Activated CD4-positive, alpha-beta memory T cell treated with anti-CD3 and anti-CD28 coated beads, Interleukin-2, amount 10 ng/mL, durations not matched to agents 7 days and 5 days (primary cell): ENCODE measurements at regions of chr5 and their contacts with region 1.

Region 1: DNA sequence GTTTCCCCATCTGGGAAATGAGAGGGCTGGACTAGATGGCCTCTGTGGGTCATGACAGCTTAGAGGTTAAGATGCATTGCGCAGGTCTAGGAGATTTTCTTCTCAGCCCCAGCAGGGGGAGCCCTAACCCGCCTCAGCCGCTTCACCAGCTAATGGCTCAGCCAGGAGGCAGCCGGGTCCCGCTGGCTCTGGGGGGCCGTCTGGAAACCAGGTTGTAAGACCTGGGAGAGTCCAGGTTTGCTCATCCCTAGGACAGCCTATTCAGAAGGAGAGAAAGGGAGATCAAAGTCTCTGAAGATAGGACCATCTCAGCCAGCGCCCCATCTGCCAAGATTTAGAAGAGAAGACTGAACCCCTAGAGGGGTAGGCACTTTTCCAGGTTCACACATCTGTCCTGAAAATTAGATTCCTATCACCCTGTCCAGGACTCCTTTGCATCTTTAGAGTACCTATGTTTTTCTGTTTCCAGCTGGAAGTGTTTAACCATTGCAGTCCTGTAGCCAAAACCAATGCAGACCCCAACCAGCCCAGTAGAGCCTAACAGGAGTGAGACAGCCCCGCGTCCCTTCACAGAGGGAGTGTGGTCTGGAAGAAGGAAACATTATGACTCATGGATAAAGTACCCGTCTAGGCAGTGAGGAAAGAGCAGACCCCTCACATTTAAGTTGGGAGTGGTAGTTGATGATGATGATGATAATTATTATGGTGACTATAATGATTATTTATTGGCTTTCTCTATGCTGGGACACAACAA is 27.5 kb downstream of the SPARC start:
- DNase-seq: peak; percentile 82
- H3K4me3 Mint-ChIP-seq: no peak overlapping the region
- H3K27ac Mint-ChIP-seq: no peak overlapping the region
- H3K4me1 Mint-ChIP-seq: peaks cover 19% of the 10 kb centered on the region
- H3K27me3 Mint-ChIP-seq: peaks cover 11% of the 10 kb centered on the region

Region 2: DNA sequence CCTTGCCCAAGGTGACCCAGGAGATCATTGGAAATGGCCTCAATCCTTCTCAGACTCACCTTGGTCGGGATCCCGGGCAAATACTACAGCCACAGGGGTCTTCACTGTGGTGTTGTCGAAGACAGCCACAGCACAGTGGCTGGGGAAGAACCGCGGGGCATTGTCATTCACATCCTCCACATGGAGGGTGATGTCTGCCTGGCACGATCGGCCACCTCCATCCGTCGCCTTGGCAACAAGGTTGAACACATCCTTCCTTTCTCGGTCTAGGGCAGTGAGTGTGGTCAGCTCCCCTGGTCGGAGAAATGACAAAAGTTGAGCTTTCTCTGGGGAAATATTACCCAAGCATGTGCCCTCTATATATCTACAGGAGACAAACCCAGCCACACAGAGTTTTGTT is 124.8 kb before region 1 on chr5:
- CTCF ChIA-PET with region 1: no interaction called
- POLR2A ChIA-PET with region 1: no interaction called
- DNase-seq: no peak
- H3K4me3 Mint-ChIP-seq: no peak overlapping the region
- H3K27ac Mint-ChIP-seq: no peak overlapping the region
- H3K4me1 Mint-ChIP-seq: no peaks in the 10 kb centered on the region
- H3K27me3 Mint-ChIP-seq: no peaks in the 10 kb centered on the region

Region 3: DNA sequence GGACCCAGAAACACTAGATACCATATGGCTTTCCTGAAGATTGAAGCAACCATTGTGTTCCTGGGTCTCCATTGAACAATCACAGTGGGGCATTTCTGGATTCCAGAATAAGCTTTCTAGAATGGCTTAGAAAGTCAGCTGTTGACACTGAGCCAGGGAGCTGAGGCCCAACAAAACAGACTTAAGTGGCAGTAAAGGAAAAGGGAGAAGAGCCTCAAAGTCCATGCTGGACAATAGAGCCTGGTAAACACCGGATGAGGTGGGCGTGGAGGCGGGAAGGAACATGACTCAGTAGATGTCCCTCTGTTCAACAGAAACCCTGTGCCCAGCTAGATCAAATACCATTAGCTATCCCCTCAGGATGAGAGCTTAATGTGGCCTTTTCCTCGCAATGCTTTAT is 12.8 kb after region 1 on chr5:
- CTCF ChIA-PET with region 1: interaction called, 41 read pairs
- POLR2A ChIA-PET with region 1: interaction called, 3 read pairs
- DNase-seq: no peak
- H3K4me3 Mint-ChIP-seq: no peak overlapping the region
- H3K27ac Mint-ChIP-seq: no peak overlapping the region
- H3K4me1 Mint-ChIP-seq: peaks cover 3% of the 10 kb centered on the region
- H3K27me3 Mint-ChIP-seq: peaks cover 7% of the 10 kb centered on the region

Region 4: DNA sequence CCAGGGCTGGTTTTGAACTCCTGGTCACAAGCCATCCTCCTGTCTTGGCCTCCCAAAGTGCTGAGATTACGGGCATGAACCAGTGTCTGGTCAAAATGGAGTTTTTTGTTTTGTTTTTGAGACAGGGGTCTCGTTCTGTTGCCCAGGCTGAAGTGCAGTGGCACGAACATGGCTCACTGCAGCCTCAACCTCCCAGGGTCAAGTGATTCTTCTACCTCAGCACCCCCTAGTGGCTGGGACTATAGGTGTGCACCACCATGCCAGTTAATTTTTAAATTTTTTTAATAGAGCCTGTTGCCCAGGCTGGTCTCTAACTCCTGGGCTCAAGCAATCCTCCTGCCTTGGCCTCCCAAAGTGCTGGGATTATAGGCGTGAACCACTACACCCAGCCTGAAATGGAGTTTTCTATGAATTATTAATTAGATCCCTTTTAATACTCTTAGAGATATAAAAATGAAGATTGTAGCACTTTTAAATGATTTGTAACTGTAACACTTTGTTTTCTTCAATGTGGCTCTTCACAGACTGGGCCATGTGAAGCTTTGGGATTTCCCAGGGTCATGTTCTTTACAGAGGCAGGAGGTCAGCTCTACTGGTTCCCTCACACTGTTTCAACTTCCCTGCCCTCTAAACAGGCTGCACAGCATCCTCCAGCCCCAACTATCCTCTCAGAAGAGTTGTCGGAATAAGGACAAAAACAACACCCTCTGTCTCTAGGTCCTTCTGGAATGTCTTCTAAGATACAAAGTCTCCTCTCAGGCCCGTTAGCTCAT is 60.2 kb after region 1 on chr5:
- CTCF ChIA-PET with region 1: interaction called, 22 read pairs
- POLR2A ChIA-PET with region 1: no interaction called
- DNase-seq: peak; percentile 37
- H3K4me3 Mint-ChIP-seq: no peak overlapping the region
- H3K27ac Mint-ChIP-seq: no peak overlapping the region
- H3K4me1 Mint-ChIP-seq: peaks cover 12% of the 10 kb centered on the region
- H3K27me3 Mint-ChIP-seq: no peaks in the 10 kb centered on the region